IMR-90 (cell line): ENCODE measurements at regions of chr5 and their contacts with region 1.

Region 1: DNA sequence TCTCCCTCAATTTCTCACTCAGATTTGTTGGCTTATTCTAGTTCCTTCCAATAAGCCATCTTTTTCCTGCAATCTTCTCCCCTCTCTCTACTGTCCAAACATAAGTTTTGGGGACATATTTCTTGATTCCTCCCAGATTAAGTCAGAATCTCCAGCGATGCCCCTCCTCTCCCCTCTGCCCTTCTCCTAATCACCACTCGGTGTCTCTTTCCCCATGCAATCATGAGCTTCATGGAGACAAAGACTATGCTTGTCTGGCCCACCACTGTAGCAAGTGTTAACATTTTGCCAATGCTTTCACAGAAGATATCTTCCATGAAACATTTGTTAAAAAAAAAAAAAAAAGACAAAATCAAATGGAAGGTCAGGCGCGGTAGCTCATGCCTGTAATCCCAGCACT is 42.4 kb downstream of the PDE6A start:
- DNase-seq: no peak
- ATAC-seq: no peak
- H3K4me3 ChIP-seq: no peak overlapping the region
- H3K27ac ChIP-seq: no peak overlapping the region
- H3K4me1 ChIP-seq: no peaks in the 10 kb centered on the region
- H3K27me3 ChIP-seq: peaks cover 31% of the 10 kb centered on the region
- CTCF ChIP-seq: no peak
- POLR2A ChIP-seq: no peak
- RAD21 ChIP-seq: no peak

Region 2: DNA sequence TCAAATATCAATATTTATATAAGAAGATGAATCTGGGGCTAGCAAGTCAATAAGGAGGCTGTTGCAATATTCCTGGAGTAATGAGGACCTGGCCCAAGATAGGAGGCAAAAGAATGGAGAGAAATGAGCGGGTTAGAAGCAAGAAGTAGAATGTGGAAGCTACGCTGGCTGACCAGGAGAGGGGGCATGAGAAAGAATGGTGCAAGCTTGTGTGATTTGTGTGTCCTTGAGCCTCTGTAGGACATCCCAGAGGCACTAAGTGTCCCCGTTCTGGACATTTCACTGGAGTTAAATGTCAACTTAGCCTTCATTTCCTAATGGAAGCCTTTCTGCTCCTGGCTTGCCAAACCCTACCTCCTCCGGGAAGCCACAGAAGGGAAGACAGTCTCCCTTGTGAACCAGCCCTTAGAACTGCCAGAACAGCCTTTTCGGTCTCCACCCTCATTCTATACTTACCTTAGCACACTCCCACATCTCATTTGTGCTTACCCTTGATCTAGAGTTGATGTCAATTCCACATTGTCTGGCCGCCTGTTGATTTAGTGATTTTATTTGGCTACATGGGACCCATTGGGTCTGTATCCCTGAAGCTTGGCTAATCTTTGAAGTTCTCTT is 49.1 kb after region 1 on chr5:
- CTCF ChIA-PET with region 1: no interaction called
- POLR2A ChIA-PET with region 1: no interaction called
- dilution Hi-C with region 1: no loop called
- in situ Hi-C with region 1: no loop called
- intact Hi-C with region 1: loop called (anchors 1 kb)
- DNase-seq: no peak
- ATAC-seq: no peak
- H3K4me3 ChIP-seq: no peak overlapping the region
- H3K27ac ChIP-seq: no peak overlapping the region
- H3K4me1 ChIP-seq: no peaks in the 10 kb centered on the region
- H3K27me3 ChIP-seq: peaks cover 33% of the 10 kb centered on the region
- CTCF ChIP-seq: no peak
- POLR2A ChIP-seq: no peak
- RAD21 ChIP-seq: no peak

Region 3: GRCh38 chr5:150000256-150000989 is 98.2 kb after region 1 on chr5 and contains the starts of genes HMGXB3 and TIGD6:
- CTCF ChIA-PET with region 1: no interaction called
- POLR2A ChIA-PET with region 1: no interaction called
- dilution Hi-C with region 1: no loop called
- in situ Hi-C with region 1: no loop called
- intact Hi-C with region 1: no loop called
- DNase-seq: peak; percentile 95
- ATAC-seq: peak; percentile 88
- H3K4me3 ChIP-seq: peak within 1 kb of the TSS; percentile 62
- H3K27ac ChIP-seq: peak within 1 kb of the TSS; percentile 75
- H3K4me1 ChIP-seq: no peaks in the 10 kb centered on the region; the same call in 1 of the 2 replicates
- H3K27me3 ChIP-seq: no peaks in the 10 kb centered on the region
- CTCF ChIP-seq: no peak
- POLR2A ChIP-seq: peak; percentile 92
- RAD21 ChIP-seq: no peak; the same call in 1 of the 2 replicates
- total RNA-seq, gene HMGXB3: 27.6 and 29.2 TPM in 2 replicates
- total RNA-seq, gene TIGD6: 6.1 and 6.6 TPM in 2 replicates